Endothelial cell of umbilical vein (primary cell): ENCODE measurements at regions of chr17 and their contacts with region 1.

Region 1: DNA sequence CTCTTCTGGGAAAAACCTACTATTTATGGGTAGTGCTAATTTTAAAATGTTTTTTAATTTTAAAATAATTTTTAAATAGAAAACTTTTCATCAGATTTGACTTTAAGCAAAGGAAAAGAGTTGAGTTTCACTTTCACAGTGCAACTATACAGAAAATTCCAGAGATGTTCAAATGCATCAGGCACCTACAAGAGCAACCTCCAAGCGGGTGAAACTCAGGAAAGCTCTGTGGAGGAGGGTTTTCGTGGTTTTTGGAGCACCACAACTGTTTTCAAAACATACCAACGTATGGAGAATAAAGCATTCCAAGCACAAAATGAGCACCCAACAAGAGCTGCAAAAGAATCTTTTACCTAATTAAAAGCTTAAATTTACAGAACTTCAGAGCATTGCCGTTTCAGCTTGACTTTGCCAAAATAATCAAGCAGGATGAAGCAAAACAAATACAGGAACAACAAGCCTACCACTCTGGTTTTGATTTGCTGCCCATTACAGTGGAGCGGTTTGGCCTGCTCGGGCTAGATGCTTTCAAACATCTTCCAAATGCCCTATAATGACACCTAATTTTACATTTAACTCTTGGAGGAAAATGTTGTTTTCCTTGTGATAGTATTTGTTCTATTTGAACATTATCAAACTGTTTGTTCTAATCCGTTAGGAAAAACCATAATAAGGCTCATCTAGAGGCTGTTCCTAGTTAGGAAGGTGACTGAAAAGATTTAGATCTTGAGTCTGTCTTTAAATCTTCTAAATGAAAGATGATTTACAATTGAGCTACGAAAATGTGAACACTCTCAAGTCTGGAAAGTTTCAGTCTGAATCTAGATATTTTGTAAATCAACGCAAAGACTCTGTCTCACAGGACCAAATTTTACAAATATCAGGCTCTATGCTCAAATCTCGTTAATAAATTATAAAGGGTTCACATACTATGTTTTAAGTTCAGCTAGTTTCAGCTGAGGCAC is 34.5 kb downstream of the NACA2 start:
- DNase-seq: no peak
- H3K4me3 ChIP-seq: no peak overlapping the region
- H3K27ac ChIP-seq: no peak overlapping the region
- H3K4me1 ChIP-seq: no peaks in the 10 kb centered on the region
- H3K27me3 ChIP-seq: peaks cover 8 to 10% of the 10 kb centered on the region in 2 experiments
- CTCF ChIP-seq: no peak
- POLR2A ChIP-seq: no peak

Region 2: GRCh38 chr17:61605692-61606091 is 49.2 kb after region 1 on chr17:
- CTCF ChIA-PET with region 1: no interaction called
- POLR2A ChIA-PET with region 1: no interaction called
- dilution Hi-C with region 1: no loop called
- intact Hi-C with region 1: loop called (anchors 2 kb)
- DNase-seq: no peak
- H3K4me3 ChIP-seq: no peak overlapping the region
- H3K27ac ChIP-seq: no peak overlapping the region
- H3K4me1 ChIP-seq: no peaks in the 10 kb centered on the region
- H3K27me3 ChIP-seq: no peaks in the 10 kb centered on the region
- CTCF ChIP-seq: no peak
- POLR2A ChIP-seq: no peak